PC-3 (cell line): ENCODE measurements at regions of chr13 and their contacts with region 1.

Region 1: GRCh38 chr13:114087430-114087829 is 45.0 kb downstream of the RASA3 start:
- DNase-seq: no peak
- ATAC-seq: no peak
- H3K4me3 ChIP-seq: no peak overlapping the region
- H3K27ac ChIP-seq: no peak overlapping the region
- H3K4me1 ChIP-seq: no peaks in the 10 kb centered on the region
- H3K27me3 ChIP-seq: no peaks in the 10 kb centered on the region
- CTCF ChIP-seq: no peak

Region 2: DNA sequence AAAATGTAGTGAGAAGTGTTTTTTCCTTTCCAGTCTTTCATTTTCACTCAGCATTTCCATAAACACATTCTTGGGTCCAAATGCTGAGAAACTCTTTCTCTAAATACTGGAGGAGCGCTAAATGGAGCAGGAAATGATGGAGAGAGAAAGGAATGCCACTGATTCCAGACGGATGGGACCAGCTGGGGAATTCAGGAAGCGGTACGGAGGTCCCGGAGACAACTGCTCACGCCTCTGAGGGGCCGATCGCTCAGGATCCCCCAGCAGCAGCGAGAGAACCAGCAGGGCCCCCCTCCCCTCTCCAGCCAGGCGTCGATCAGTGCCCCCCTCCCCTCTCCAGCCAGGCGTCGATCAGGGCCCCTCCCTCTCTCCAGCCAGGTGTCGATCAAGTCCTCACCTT is 31.8 kb after region 1 on chr13:
- CTCF ChIA-PET with region 1: no interaction called
- POLR2A ChIA-PET with region 1: interaction called, 11 read pairs
- intact Hi-C with region 1: no loop called
- DNase-seq: peak; percentile 68
- ATAC-seq: peak; percentile 66
- H3K4me3 ChIP-seq: peak overlapping the region; percentile 51
- H3K27ac ChIP-seq: peak overlapping the region; percentile 67
- H3K4me1 ChIP-seq: peaks cover 30% of the 10 kb centered on the region
- H3K27me3 ChIP-seq: no peaks in the 10 kb centered on the region
- CTCF ChIP-seq: no peak